GM12878 (cell line): ENCODE measurements at regions of chr6 and their contacts with region 1.

Region 1: GRCh38 chr6:125790358-125791150 is at the start of gene NCOA7:
- DNase-seq: no peak
- ATAC-seq: peak; percentile 83
- H3K4me3 ChIP-seq: peak within 1 kb of the TSS; percentile 91
- H3K27ac ChIP-seq: peak within 1 kb of the TSS; percentile 91
- H3K4me1 ChIP-seq: peaks cover 24% of the 10 kb centered on the region
- H3K27me3 ChIP-seq: no peaks in the 10 kb centered on the region
- CTCF ChIP-seq: no peak
- EP300 ChIP-seq: no peak
- POLR2A ChIP-seq: peak; percentile 85
- RAD21 ChIP-seq: no peak
- polyA plus RNA-seq, gene NCOA7: 18.9 to 28.8 TPM

Region 2: DNA sequence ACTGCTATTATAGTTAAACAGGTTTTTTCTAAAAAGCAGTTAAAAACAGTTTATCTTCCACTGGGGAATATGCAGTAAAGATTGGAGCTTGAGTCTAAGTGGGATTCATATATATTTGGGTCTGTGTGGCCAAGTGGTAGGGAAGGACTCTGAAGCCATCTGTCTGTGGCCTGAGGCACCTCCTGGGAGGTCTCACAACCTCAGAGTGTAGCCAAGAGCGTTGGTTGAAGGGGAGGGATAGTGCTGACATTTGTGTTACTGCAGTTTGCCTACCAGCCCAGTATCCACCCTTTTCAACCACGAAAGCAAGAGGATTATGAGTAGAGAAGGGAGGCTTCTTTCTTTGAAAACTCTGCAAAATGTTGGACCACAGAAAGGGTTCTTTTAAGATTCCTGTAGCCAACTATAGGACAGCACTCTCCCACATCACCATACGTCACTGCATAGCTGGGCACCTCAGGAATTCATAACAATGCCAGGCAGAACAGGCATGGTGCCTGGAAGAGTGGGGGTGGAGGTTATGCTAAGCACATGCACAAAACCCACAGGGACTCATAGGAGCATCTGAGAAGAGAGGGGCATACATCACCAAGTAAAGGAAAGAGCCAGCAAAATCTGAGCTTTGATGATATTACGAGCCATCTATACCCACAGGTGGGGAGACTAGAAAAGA is 131.7 kb before region 1 on chr6:
- CTCF ChIA-PET with region 1: no interaction called
- POLR2A ChIA-PET with region 1: no interaction called
- RAD21 ChIA-PET with region 1: no interaction called
- SMC1A ChIA-PET with region 1: no interaction called
- in situ Hi-C with region 1: no loop called
- intact Hi-C with region 1: no loop called
- DNase-seq: no peak
- ATAC-seq: no peak
- H3K4me3 ChIP-seq: no peak overlapping the region
- H3K27ac ChIP-seq: no peak overlapping the region
- H3K4me1 ChIP-seq: no peaks in the 10 kb centered on the region
- H3K27me3 ChIP-seq: no peaks in the 10 kb centered on the region
- CTCF ChIP-seq: no peak
- EP300 ChIP-seq: no peak
- POLR2A ChIP-seq: no peak
- RAD21 ChIP-seq: no peak

Region 3: GRCh38 chr6:125670568-125670967 is 120.0 kb before region 1 on chr6:
- CTCF ChIA-PET with region 1: no interaction called
- POLR2A ChIA-PET with region 1: no interaction called
- RAD21 ChIA-PET with region 1: no interaction called
- SMC1A ChIA-PET with region 1: no interaction called
- in situ Hi-C with region 1: no loop called
- intact Hi-C with region 1: no loop called
- DNase-seq: no peak
- ATAC-seq: no peak
- H3K4me3 ChIP-seq: no peak overlapping the region
- H3K27ac ChIP-seq: no peak overlapping the region
- H3K4me1 ChIP-seq: no peaks in the 10 kb centered on the region
- H3K27me3 ChIP-seq: no peaks in the 10 kb centered on the region; a peak in 2 of 4 replicates
- CTCF ChIP-seq: no peak
- EP300 ChIP-seq: no peak
- POLR2A ChIP-seq: no peak
- RAD21 ChIP-seq: no peak

Region 4: GRCh38 chr6:125812394-125813292 is 22.1 kb after region 1 on chr6:
- CTCF ChIA-PET with region 1: interaction called, 197 read pairs
- POLR2A ChIA-PET with region 1: interaction called, 79 read pairs
- RAD21 ChIA-PET with region 1: interaction called, 185 read pairs
- SMC1A ChIA-PET with region 1: interaction called, 325 read pairs
- in situ Hi-C with region 1: no loop called
- intact Hi-C with region 1: no loop called
- DNase-seq: no peak
- ATAC-seq: no peak
- H3K4me3 ChIP-seq: no peak overlapping the region
- H3K27ac ChIP-seq: no peak overlapping the region
- H3K4me1 ChIP-seq: peaks cover 68% of the 10 kb centered on the region
- H3K27me3 ChIP-seq: no peaks in the 10 kb centered on the region
- CTCF ChIP-seq: no peak
- EP300 ChIP-seq: no peak
- POLR2A ChIP-seq: no peak
- RAD21 ChIP-seq: no peak

Region 5: DNA sequence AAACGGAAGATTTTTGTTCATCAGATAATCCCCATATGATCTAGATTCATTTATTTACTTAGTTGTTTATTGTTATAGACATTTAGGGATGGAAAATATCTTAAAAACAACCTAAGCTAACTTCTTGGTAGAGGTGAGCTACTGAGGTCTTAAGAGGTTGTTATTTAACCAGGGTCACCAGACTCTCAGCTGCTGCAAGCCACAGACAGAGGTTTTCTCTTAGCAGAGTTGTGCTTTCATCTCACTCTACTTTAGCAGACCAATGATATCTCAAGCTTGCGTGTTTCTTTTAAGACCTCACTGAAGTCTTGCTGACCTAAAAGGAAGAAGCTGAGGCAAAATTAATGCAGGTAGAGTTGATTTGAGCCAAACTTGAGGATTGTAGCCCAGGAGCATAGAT is 43.8 kb after region 1 on chr6:
- CTCF ChIA-PET with region 1: interaction called, 30 read pairs
- POLR2A ChIA-PET with region 1: interaction called, 22 read pairs
- RAD21 ChIA-PET with region 1: interaction called, 135 read pairs
- SMC1A ChIA-PET with region 1: interaction called, 161 read pairs
- in situ Hi-C with region 1: no loop called
- intact Hi-C with region 1: loop called (anchors 5 kb)
- DNase-seq: peak; percentile 36
- ATAC-seq: peak; percentile 82
- H3K4me3 ChIP-seq: no peak overlapping the region
- H3K27ac ChIP-seq: no peak overlapping the region
- H3K4me1 ChIP-seq: peaks cover 18% of the 10 kb centered on the region
- H3K27me3 ChIP-seq: no peaks in the 10 kb centered on the region
- CTCF ChIP-seq: no peak
- EP300 ChIP-seq: 0 out of 4 replicates have a peak, but pooled peaks of 1 of the 2 experiments have one; percentile 18
- POLR2A ChIP-seq: no peak
- RAD21 ChIP-seq: no peak

Region 6: DNA sequence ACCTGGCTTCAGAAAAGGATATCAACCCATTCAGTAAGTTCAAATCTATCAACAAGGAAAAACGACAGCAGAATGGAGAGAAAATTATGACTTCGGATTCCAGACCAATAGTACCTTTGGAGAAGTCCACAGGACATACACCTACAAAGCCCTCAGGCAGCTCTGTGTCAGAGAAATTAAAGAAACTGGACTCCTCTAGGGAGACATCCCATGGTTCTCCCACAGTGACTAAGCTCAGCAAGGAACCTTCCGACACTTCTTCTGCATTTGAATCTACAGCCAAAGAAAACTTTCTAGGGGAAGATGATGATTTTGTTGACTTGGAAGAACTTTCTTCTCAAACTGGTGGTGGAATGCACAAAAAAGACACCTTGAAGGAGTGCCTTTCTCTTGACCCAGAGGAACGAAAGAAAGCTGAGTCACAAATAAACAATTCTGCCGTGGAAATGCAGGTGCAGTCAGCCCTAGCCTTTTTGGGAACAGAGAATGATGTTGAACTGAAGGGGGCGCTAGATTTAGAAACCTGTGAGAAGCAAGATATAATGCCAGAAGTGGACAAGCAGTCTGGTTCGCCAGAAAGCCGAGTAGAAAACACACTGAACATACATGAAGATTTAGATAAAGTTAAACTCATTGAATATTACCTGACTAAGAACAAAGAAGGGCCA is 98.6 kb after region 1 on chr6:
- CTCF ChIA-PET with region 1: interaction called, 33 read pairs
- POLR2A ChIA-PET with region 1: no interaction called
- RAD21 ChIA-PET with region 1: interaction called, 6 read pairs
- SMC1A ChIA-PET with region 1: interaction called, 26 read pairs
- in situ Hi-C with region 1: no loop called
- intact Hi-C with region 1: no loop called
- DNase-seq: no peak
- ATAC-seq: peak; percentile 66
- H3K4me3 ChIP-seq: no peak overlapping the region
- H3K27ac ChIP-seq: no peak overlapping the region
- H3K4me1 ChIP-seq: no peaks in the 10 kb centered on the region
- H3K27me3 ChIP-seq: no peaks in the 10 kb centered on the region
- CTCF ChIP-seq: peak; percentile 46 to 52 (median 50)
- EP300 ChIP-seq: no peak
- POLR2A ChIP-seq: no peak
- RAD21 ChIP-seq: peak; percentile 51

Region 7: GRCh38 chr6:125918681-125919566 is 128.4 kb after region 1 on chr6:
- CTCF ChIA-PET with region 1: interaction called, 20 read pairs
- POLR2A ChIA-PET with region 1: interaction called, 17 read pairs
- RAD21 ChIA-PET with region 1: interaction called, 25 read pairs
- SMC1A ChIA-PET with region 1: interaction called, 41 read pairs
- in situ Hi-C with region 1: no loop called
- intact Hi-C with region 1: no loop called
- DNase-seq: peak; percentile 93
- ATAC-seq: peak; percentile 94
- H3K4me3 ChIP-seq: peak overlapping the region; percentile 62
- H3K27ac ChIP-seq: peak overlapping the region; percentile 96
- H3K4me1 ChIP-seq: peaks cover 8% of the 10 kb centered on the region
- H3K27me3 ChIP-seq: no peaks in the 10 kb centered on the region
- CTCF ChIP-seq: no peak
- EP300 ChIP-seq: 0 out of 4 replicates have a peak, but pooled peaks have one; percentile 11 to 25
- POLR2A ChIP-seq: peak; percentile 72
- RAD21 ChIP-seq: no peak

Region 8: GRCh38 chr6:125974214-125974866 is 183.8 kb after region 1 on chr6:
- CTCF ChIA-PET with region 1: interaction called, 40 read pairs
- POLR2A ChIA-PET with region 1: interaction called, 4 read pairs
- RAD21 ChIA-PET with region 1: interaction called, 28 read pairs
- SMC1A ChIA-PET with region 1: interaction called, 33 read pairs
- in situ Hi-C with region 1: no loop called
- intact Hi-C with region 1: no loop called
- DNase-seq: no peak
- ATAC-seq: peak; percentile 93
- H3K4me3 ChIP-seq: no peak overlapping the region
- H3K27ac ChIP-seq: no peak overlapping the region
- H3K4me1 ChIP-seq: no peaks in the 10 kb centered on the region
- H3K27me3 ChIP-seq: no peaks in the 10 kb centered on the region
- CTCF ChIP-seq: peak; percentile 21 to 57 (median 49); a peak in 3 of 6 replicates
- EP300 ChIP-seq: no peak
- POLR2A ChIP-seq: no peak
- RAD21 ChIP-seq: peak; percentile 48